T-cell (primary cell): ENCODE measurements at regions of chr9 and their contacts with region 1.

Region 1: DNA sequence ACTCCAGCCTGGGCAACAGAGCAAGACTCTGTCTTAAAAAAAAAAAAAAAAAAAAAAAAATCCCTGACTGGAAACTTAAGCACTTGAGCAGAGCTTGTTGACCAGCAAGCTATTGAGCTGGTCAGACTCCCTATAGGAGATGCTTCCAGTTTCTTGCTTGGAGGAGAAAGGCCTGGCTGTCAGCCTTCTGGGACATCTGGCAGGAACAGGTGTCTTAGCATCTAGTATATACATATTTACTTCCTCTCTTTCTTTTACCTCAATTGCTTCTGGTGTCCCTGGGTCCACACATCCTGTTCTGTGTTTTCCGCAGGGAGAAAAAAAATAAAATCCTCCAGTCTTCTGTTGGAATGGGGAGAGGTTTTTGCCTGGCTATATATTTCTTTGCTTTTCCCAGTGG is 60.1 kb downstream of the PRKACG start:
- DNase-seq: no peak
- ATAC-seq: no peak
- H3K4me3 ChIP-seq: no peak overlapping the region
- H3K4me3 Mint-ChIP-seq: no peak overlapping the region
- H3K27ac ChIP-seq: no peak overlapping the region
- H3K27ac Mint-ChIP-seq: no peak overlapping the region
- H3K4me1 ChIP-seq: peaks cover 0 to 6% of the 10 kb centered on the region in 2 experiments
- H3K4me1 Mint-ChIP-seq: peaks cover 9 to 15% (median 11%) of the 10 kb centered on the region in 3 donors
- H3K27me3 ChIP-seq: no peaks in the 10 kb centered on the region
- H3K27me3 Mint-ChIP-seq: peaks cover 10 to 18% of the 10 kb centered on the region in 2 donors

Region 2: GRCh38 chr9:68584189-68585033 is 369.4 kb before region 1 on chr9:
- CTCF ChIA-PET with region 1: interaction called in 1 of 2 experiments, 10 read pairs
- POLR2A ChIA-PET with region 1: no interaction called
- DNase-seq: peak; percentile 56 to 93 (median 77)
- ATAC-seq: peak; percentile 83 to 97 (median 93)
- H3K4me3 ChIP-seq: no peak overlapping the region
- H3K4me3 Mint-ChIP-seq: no peak overlapping the region
- H3K27ac ChIP-seq: no peak overlapping the region
- H3K27ac Mint-ChIP-seq: no peak overlapping the region
- H3K4me1 ChIP-seq: no peaks in the 10 kb centered on the region
- H3K4me1 Mint-ChIP-seq: peaks cover 0 to 5% (median 0%) of the 10 kb centered on the region in 3 donors
- H3K27me3 ChIP-seq: peaks cover 0 to 5% of the 10 kb centered on the region in 2 experiments
- H3K27me3 Mint-ChIP-seq: peaks cover 0 to 17% of the 10 kb centered on the region in 2 donors

Region 3: DNA sequence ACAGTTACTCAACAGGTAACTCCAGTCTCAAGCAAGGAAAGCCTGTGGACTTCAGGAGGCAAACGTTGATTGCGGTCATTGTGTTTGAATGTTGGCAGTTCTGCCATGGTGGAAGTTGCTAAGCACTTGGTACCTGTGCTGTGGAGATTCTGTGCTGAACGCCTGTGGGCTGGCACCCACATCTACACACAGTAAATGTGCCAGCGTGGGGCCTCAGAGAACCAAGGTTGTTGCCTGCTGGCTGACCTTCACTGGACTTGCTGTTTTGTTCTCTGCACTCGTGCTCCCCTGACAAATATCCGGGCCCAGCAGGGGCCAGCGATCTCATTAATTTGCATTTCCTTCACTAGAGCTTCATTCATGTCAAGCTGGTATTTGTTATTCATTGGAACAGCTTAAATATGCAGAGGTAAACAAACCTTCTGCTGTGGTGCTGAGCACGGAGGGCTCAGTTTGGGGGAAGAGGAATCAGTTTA is 81.7 kb before region 1 on chr9:
- CTCF ChIA-PET with region 1: no interaction called
- POLR2A ChIA-PET with region 1: no interaction called
- DNase-seq: no peak
- ATAC-seq: no peak
- H3K4me3 ChIP-seq: no peak overlapping the region
- H3K4me3 Mint-ChIP-seq: no peak overlapping the region
- H3K27ac ChIP-seq: no peak overlapping the region
- H3K27ac Mint-ChIP-seq: no peak overlapping the region
- H3K4me1 ChIP-seq: no peaks in the 10 kb centered on the region
- H3K4me1 Mint-ChIP-seq: no peaks in the 10 kb centered on the region
- H3K27me3 ChIP-seq: peaks cover 0 to 1% of the 10 kb centered on the region in 2 experiments
- H3K27me3 Mint-ChIP-seq: no peaks in the 10 kb centered on the region